Activated T-helper 1 cell treated with anti-CD3 and anti-CD28 coated beads, Interleukin-12 subunit alpha, Interleukin-12 subunit beta, Interleukin-2, Interleukin-4 antibody, amounts not matched to agents 30 ng/mL and 10 ng/mL and 1 ng/mL, durations not matched to agents 14 hours and 24 hours and 36 hours (primary cell): ENCODE measurements at regions of chr4 and their contacts with region 1.

Region 1: DNA sequence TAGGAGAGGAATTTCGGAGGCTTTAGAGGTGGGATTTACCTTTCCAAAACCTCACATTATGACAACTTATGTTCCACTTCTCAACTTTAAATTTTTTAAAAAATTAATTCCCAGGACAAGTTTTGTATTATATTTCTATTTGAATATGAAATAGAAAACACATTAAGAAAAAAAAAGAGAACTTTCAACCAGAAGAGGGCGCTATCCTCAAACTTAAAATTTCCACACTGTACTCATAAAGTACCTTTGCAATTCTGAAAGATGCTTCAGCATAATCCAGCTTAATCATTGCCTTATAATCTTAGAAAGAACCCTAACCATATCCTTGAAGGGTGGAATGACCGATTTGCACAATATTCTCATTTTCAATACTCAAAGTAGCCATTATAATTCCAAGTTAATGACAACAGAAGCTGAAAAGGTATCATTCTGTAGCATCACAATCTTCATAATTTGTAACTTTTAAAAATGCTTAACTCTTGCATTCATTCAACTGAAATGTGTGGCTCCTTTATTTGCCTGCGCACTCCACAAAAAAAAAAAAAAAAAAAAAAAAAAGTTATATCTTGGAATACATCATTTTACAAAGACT is 158.0 kb downstream of the KCNIP4 start:
- DNase-seq: no peak
- H3K4me3 Mint-ChIP-seq: no peak overlapping the region
- H3K27ac Mint-ChIP-seq: no peak overlapping the region
- H3K4me1 Mint-ChIP-seq: no peaks in the 10 kb centered on the region
- H3K27me3 Mint-ChIP-seq: no peaks in the 10 kb centered on the region

Region 2: GRCh38 chr4:22356987-22357596 is 566.6 kb after region 1 on chr4:
- intact Hi-C with region 1: loop called (anchors 1 kb)
- DNase-seq: no peak
- H3K4me3 Mint-ChIP-seq: no peak overlapping the region
- H3K27ac Mint-ChIP-seq: no peak overlapping the region
- H3K4me1 Mint-ChIP-seq: no peaks in the 10 kb centered on the region
- H3K27me3 Mint-ChIP-seq: peaks cover 3% of the 10 kb centered on the region